Right lobe of liver (tissue), 6 donors: ENCODE measurements at regions of chr12 and their contacts with region 1.

Region 1: DNA sequence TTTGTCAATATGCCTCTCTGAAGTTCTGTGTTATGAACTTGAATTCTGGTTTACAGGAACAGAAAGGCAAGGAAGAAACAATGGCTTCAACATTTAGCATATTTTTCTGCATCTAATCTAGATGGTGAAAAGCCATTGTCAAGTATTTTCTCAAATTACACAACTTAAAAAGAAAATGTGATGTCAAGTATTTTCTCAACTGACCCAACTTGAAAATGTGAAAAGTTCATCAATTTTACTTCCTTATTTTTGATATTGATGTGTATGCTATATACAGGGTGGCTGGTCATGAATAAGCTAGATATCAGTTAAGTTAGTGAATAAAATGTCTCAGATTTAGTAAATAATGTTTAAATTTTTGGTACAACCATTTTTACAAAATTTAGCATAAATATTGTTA is 196.7 kb downstream of the ALX1 start:
- DNase-seq: no peak
- ATAC-seq: no peak
- H3K4me3 ChIP-seq: no peak overlapping the region
- H3K27ac ChIP-seq: no peak overlapping the region
- H3K4me1 ChIP-seq: no peaks in the 10 kb centered on the region
- H3K27me3 ChIP-seq: no peaks in the 10 kb centered on the region
- CTCF ChIP-seq: no peak
- POLR2A ChIP-seq: no peak

Region 2: GRCh38 chr12:85413266-85413665 is 63.5 kb before region 1 on chr12:
- intact Hi-C with region 1: no loop called
- DNase-seq: no peak
- ATAC-seq: no peak
- H3K4me3 ChIP-seq: no peak overlapping the region
- H3K27ac ChIP-seq: no peak overlapping the region
- H3K4me1 ChIP-seq: no peaks in the 10 kb centered on the region
- H3K27me3 ChIP-seq: no peaks in the 10 kb centered on the region
- CTCF ChIP-seq: no peak
- POLR2A ChIP-seq: no peak

Region 3: DNA sequence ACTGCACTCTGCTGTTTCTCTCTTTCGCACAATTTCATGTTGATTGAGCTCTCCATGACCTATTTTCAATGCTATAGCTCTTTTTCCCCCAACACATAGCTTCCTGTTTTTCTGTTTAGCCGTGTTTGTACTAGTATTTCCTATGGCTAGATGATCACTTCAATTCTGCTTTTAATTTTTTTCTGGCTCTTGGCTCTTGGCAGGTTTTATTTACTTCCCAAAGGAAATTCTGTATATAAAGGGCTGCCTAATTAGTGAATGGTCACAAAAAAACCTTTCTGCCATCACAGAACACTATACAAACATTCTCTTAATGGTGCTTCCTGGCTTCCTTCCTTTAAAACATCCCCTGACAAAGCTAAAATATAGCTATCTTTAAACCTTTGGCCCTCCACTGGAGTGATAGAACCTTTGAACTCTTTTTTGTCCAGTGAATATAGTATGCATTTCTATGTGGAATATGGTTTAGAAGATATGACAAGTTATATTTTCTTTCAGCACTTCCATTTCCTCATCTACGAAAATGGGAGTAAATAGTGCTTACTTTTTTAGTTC is 271.3 kb after region 1 on chr12:
- intact Hi-C with region 1: no loop called
- DNase-seq: no peak
- ATAC-seq: peak in 1 of 4 donors; percentile 29
- H3K4me3 ChIP-seq: no peak overlapping the region
- H3K27ac ChIP-seq: no peak overlapping the region
- H3K4me1 ChIP-seq: no peaks in the 10 kb centered on the region
- H3K27me3 ChIP-seq: no peaks in the 10 kb centered on the region
- CTCF ChIP-seq: no peak
- POLR2A ChIP-seq: no peak

Region 4: DNA sequence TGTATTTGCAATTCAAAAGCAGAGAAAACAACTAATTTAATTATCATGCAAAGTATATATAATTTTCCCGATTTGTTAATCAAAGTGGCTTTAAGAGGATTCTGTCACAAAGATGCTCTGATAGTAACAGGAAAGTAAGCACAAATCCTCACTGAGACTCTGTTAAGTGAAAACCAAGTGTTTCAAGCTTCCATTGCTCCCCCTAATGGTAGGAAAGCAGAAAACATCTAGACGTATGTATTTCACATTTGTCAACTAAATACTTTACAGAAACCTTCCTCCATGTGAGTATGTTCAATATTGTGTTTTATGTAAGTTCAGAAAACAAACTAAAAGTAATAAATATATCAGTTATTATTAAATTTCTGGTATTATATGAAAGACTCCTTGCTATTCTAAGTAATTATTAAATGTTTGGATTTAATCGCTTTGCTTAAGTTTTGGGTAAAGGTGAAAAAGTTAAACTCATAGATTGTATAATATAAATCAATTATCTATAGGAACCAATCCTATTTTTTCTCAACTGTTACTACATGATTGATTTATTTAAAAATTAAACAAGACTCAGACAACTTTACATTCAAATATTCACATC is 395.8 kb after region 1 on chr12:
- intact Hi-C with region 1: loop called in 1 of 2 experiments (anchors 10 kb)
- DNase-seq: no peak
- ATAC-seq: peak; percentile 77 to 91 (median 78)
- H3K4me3 ChIP-seq: no peak overlapping the region
- H3K27ac ChIP-seq: no peak overlapping the region
- H3K4me1 ChIP-seq: no peaks in the 10 kb centered on the region
- H3K27me3 ChIP-seq: no peaks in the 10 kb centered on the region
- CTCF ChIP-seq: peak; percentile 55 to 74 (median 72)
- POLR2A ChIP-seq: no peak